Activated CD4-positive, alpha-beta memory T cell treated with anti-CD3 and anti-CD28 coated beads, Interleukin-2, amount 10 ng/mL, durations not matched to agents 7 days and 5 days (primary cell): ENCODE measurements at regions of chr7 and their contacts with region 1.

Region 1: DNA sequence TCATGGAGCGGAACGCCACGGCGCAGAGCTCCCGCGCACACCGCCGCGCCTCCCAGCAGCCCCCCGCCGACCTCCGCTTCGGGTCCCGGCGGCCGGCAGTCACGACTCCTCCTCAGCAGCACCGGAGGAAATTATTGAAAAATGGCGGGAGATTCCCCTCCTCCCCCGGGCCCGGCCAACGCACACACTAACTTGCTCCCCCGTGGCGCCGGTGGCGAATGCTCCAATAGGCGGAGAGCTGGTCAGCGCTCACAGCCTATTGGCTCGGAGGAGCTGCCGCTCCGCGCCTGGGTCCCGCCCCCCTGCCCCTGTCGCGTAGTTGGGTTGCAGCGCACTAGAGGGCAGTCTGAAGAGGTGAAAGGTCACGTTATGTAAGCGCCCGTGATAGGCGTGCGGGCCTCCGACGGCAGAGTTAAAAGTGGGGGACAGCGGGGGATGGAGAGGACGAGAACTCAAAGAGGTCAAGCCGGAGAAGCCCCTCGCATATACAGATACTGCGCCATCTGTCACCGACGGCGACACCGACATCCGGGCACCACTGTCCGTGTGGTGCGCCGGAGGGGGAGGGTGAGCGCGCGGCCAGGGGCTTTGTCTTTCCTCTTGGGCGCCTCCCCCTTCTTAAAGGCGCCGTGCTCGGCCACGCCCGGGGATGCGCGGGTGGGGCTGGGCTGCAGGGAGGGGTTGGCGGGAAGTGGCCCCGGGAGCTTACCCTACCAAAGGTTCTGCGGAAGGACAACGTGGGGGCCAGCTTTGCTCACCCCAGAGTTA is at the start of gene BAZ1B:
- DNase-seq: peak; percentile 98
- H3K4me3 Mint-ChIP-seq: peak within 1 kb of the TSS; percentile 92
- H3K27ac Mint-ChIP-seq: peak within 1 kb of the TSS; percentile 88
- H3K4me1 Mint-ChIP-seq: peaks cover 61% of the 10 kb centered on the region
- H3K27me3 Mint-ChIP-seq: no peaks in the 10 kb centered on the region
- total RNA-seq, gene BAZ1B: 84.5 to 86.2 TPM

Region 2: DNA sequence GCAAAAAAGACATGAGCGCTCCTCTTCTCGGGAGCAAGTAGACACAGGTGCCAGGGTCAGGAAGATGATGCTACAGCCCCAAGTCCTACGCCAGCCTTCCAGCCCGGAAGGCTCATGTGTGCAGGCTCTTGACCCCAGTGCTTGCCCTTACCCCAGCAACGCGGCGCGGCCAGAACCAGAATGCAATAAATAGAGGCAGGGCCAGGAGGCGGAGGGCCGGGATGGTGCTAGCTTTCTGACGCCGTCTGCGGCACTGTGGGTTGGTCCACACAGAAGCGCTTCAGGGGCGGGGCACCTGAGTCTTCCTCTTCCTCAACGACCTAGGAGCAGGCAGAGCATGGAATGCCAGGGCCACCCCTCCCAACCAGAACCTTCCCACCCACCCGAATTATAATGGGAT is 14.8 kb after region 1 on chr7:
- CTCF ChIA-PET with region 1: interaction called, 3 read pairs
- POLR2A ChIA-PET with region 1: interaction called, 20 read pairs
- DNase-seq: no peak
- H3K4me3 Mint-ChIP-seq: no peak overlapping the region
- H3K27ac Mint-ChIP-seq: no peak overlapping the region
- H3K4me1 Mint-ChIP-seq: peaks cover 2% of the 10 kb centered on the region
- H3K27me3 Mint-ChIP-seq: no peaks in the 10 kb centered on the region

Region 3: GRCh38 chr7:73557108-73557396 is 34.8 kb after region 1 on chr7:
- CTCF ChIA-PET with region 1: interaction called, 8 read pairs
- POLR2A ChIA-PET with region 1: interaction called, 100 read pairs
- DNase-seq: peak; percentile 95
- H3K4me3 Mint-ChIP-seq: peak overlapping the region; percentile 90
- H3K27ac Mint-ChIP-seq: peak overlapping the region; percentile 85
- H3K4me1 Mint-ChIP-seq: peaks cover 46% of the 10 kb centered on the region
- H3K27me3 Mint-ChIP-seq: no peaks in the 10 kb centered on the region

Region 4: DNA sequence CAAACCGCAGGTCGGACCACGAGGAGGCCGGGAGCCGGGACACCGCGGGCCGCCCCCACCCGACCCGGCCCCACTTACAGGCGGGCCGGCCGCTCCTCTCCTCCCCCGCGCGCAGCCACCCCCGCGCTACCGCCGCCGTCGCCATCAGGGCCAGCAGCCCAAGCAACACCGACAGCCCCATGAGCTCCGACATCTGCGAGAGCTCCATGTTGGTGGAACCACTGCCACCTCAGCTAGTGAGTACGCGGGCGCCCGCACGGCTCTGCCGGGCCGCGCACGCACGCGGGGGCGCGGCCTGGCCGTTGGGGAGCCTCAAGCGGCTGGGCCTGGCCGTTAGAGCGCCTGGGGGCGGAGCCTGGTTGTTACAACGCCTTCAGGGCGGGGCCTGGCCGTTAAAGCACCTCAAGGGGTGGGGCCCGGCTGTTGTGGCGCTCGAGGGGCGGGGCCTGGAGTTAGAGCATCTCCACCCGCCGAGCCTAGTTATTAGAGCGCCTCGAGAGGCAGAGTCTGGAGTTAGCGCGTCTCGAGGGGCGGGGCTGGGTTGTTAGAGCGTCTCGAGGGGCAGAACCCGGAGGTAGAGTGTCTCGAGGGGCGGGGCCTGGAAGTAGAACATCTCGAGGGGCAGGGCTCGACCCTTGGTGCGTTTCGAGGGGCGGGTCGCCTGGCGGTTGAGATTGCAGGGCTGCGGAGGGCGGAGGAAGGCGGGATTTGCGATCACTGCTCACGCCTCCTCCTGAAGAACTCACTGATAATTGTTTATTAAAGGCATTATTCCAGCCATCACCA is 56.2 kb after region 1 on chr7 and contains the start of gene TBL2:
- CTCF ChIA-PET with region 1: interaction called, 4 read pairs
- POLR2A ChIA-PET with region 1: interaction called, 42 read pairs
- DNase-seq: peak; percentile 99
- H3K4me3 Mint-ChIP-seq: peak within 1 kb of the TSS; percentile 85
- H3K27ac Mint-ChIP-seq: peak within 1 kb of the TSS; percentile 96
- H3K4me1 Mint-ChIP-seq: peaks cover 39% of the 10 kb centered on the region
- H3K27me3 Mint-ChIP-seq: no peaks in the 10 kb centered on the region
- total RNA-seq, gene TBL2: 27.1 to 29.0 TPM

Region 5: GRCh38 chr7:73678862-73679261 is 156.6 kb after region 1 on chr7:
- CTCF ChIA-PET with region 1: no interaction called
- POLR2A ChIA-PET with region 1: no interaction called
- DNase-seq: no peak
- H3K4me3 Mint-ChIP-seq: no peak overlapping the region
- H3K27ac Mint-ChIP-seq: no peak overlapping the region
- H3K4me1 Mint-ChIP-seq: peaks cover 26% of the 10 kb centered on the region
- H3K27me3 Mint-ChIP-seq: no peaks in the 10 kb centered on the region